PC-3 (cell line): ENCODE measurements at regions of chr2 and their contacts with region 1.

Region 1: GRCh38 chr2:114550895-114551793 is 108.7 kb downstream of the DPP10 start:
- DNase-seq: peak; percentile 75
- ATAC-seq: peak; percentile 77
- H3K4me3 ChIP-seq: no peak overlapping the region
- H3K27ac ChIP-seq: no peak overlapping the region
- H3K4me1 ChIP-seq: no peaks in the 10 kb centered on the region
- H3K27me3 ChIP-seq: peaks cover 36% of the 10 kb centered on the region
- CTCF ChIP-seq: peak; percentile 78

Region 2: DNA sequence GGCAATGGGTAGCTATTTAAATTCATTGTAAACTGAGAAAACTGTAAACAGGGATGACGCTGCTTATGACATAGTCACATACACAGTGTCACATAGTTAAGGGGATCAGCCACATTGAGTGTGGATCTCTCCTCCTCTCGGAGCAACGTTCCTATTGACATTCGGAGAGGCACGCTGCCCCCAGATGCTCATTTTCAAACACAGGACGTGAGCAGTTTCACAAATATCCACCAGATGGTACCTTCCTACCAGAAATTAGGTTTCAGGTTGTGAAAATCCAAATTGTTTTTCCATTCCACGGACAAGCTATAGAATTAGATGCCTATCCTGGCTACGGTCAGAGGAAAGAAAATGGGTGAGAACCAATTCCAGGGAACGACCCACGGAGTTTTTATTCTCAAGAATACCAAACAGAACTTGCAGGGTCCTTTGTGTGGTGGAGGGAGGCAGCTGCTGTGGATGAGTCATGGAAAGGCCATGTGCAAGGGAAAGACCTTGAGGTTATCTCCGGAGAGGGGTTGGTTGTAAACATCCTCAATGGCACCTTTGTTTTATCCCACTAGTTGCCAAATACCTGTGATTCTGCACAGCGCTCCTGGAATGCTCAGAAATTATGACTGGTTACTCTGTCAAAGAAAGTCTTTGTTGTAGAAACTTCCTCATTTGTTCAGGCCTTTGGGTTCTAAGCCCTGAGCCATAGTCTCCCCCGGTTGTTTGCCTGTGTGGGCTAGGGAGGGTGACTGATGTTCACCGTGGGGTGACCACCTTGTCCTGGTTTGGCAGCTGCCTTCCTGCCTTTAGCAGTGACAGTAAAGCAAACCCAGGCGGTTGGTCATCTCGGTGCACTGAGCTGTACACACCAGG is 573.3 kb before region 1 on chr2:
- CTCF ChIA-PET with region 1: interaction called, 8 read pairs
- POLR2A ChIA-PET with region 1: no interaction called
- intact Hi-C with region 1: loop called (anchors 2 kb)
- DNase-seq: peak; percentile 49
- ATAC-seq: peak; percentile 35
- H3K4me3 ChIP-seq: no peak overlapping the region
- H3K27ac ChIP-seq: no peak overlapping the region
- H3K4me1 ChIP-seq: no peaks in the 10 kb centered on the region
- H3K27me3 ChIP-seq: no peaks in the 10 kb centered on the region
- CTCF ChIP-seq: peak; percentile 49